ENCODE measurements at regions of chr7 and their contacts with region 1.

Region 1: DNA sequence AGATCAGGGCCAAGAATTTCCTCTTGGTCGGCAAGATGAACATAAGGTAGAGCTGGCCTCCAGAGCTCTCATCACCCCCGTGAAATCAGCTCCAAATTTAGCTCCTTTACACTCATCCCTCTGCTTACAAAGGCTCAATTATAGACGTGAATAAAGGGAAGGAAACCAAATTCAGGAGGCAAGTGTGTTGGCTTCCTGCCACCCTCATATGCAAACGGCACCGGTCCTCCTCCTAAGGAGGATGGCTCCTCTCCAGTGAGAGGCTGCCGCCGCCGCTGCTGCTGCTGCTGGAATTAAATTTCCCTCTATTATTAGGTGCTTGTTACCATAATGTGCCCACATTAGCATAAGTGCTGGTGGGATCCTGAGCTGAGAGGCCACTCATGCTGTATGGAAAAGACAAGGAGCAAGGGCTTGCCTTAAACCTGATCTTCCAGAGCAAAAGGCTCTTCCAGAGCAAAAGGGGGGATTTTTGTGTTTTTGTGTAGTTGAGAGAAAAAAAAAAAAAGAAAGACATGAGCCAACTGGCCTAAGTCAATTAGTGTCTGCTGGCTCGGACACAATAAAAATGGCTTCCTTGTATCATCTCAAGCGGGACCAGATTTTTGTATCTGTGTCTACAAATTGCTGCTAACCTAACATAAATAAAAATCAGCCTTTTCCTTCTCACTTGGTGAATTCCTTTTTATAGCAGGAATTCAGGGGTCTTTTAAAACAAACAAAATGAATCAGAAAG is 68.4 kb downstream of the CDHR3 start:
- DNase-seq: no peak
- H3K4me3 ChIP-seq: no peak overlapping the region
- H3K27ac ChIP-seq: no peak overlapping the region
- H3K4me1 ChIP-seq: no peaks in the 10 kb centered on the region
- H3K27me3 ChIP-seq: no peaks in the 10 kb centered on the region
- CTCF ChIP-seq: no peak

Region 2: GRCh38 chr7:106003579-106003978 is 27.9 kb before region 1 on chr7:
- CTCF ChIA-PET with region 1: interaction called, 16 read pairs
- dilution Hi-C with region 1: no loop called
- in situ Hi-C with region 1: no loop called
- intact Hi-C with region 1: no loop called
- DNase-seq: no peak
- H3K4me3 ChIP-seq: no peak overlapping the region
- H3K27ac ChIP-seq: no peak overlapping the region
- H3K4me1 ChIP-seq: no peaks in the 10 kb centered on the region
- H3K27me3 ChIP-seq: no peaks in the 10 kb centered on the region
- CTCF ChIP-seq: no peak

Region 3: GRCh38 chr7:106021151-106022067 is 10.1 kb before region 1 on chr7:
- CTCF ChIA-PET with region 1: no interaction called
- dilution Hi-C with region 1: no loop called
- in situ Hi-C with region 1: no loop called
- intact Hi-C with region 1: no loop called
- DNase-seq: no peak
- H3K4me3 ChIP-seq: no peak overlapping the region
- H3K27ac ChIP-seq: no peak overlapping the region
- H3K4me1 ChIP-seq: no peaks in the 10 kb centered on the region
- H3K27me3 ChIP-seq: no peaks in the 10 kb centered on the region
- CTCF ChIP-seq: no peak

Region 4: DNA sequence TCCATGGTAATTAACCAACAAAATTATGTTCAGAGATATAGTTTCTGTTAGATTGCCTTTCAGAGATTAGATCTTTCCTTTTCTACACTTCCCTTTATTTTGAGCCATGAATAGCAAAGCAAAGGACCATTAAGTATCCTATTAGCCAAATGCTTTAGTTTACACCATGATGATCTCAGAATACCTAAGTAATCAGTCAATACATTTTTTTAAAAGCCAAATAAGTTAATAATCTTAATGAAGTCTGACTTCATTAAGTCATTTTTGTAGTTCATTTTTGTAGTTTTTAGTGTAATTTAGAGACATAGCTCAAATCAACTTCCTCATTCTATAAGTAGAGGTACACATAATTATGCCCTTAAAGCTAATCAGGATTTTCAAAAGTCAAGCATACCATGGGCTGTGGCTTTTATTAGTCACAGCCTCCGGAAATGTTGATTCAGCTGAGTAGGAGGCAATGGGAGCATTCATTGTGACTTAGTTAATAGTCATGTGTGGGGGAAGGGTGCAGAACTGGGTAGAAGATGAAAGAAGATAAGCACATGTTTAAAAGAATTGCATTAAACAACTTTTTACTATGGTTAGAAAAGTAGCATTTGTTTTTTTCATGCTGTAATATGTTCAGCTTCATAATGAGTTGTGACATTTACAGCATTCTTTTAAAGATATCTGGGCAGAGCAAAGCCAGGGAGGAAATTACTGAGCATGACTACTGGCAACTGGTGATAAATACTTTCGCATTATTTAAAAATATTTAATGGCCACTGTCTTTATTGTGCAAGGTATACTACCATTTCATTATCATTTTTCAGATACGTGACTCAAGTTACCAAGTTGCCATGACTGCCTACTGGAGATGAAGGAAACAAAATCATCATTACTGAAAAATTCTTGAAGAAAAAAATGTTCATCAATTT is 686.7 kb after region 1 on chr7:
- CTCF ChIA-PET with region 1: no interaction called
- dilution Hi-C with region 1: no loop called
- in situ Hi-C with region 1: no loop called
- intact Hi-C with region 1: no loop called
- DNase-seq: peak; percentile 95
- H3K4me3 ChIP-seq: no peak overlapping the region
- H3K27ac ChIP-seq: peak overlapping the region; percentile 98
- H3K4me1 ChIP-seq: peaks cover 23% of the 10 kb centered on the region
- H3K27me3 ChIP-seq: no peaks in the 10 kb centered on the region
- CTCF ChIP-seq: no peak